Head of caudate nucleus (tissue), 42 donors: ENCODE measurements at regions of chr5 and their contacts with region 1.

Region 1: GRCh38 chr5:146880966-146881365 is 2.4 kb upstream of the PPP2R2B start:
- DNase-seq: no peak

Region 2: GRCh38 chr5:146291421-146292074 is 589.4 kb before region 1 on chr5:
- intact Hi-C with region 1: no loop called
- DNase-seq: peak in 4 of 42 donors; percentile 4 to 31 (median 6)

Region 3: DNA sequence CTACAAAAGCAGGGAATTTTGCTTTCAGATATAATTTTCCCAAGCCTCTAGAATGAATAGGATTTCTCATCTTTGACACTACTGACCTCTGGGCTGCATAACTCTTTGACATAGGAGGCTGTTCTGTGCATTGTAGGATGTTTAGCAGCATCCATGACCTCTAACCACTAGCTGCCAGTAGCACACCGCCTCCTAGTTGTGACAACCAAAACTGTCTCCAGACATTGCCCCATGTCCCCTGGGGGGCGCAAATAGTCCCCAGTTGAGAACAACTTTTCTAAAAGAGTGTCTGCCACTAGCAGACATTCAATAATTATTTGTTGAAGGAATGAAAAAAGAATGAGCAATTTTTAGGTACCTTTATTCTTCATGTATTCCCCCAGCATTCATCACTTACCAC is 490.5 kb before region 1 on chr5:
- intact Hi-C with region 1: no loop called
- DNase-seq: no peak

Region 4: GRCh38 chr5:146751781-146752401 is 129.1 kb before region 1 on chr5:
- intact Hi-C with region 1: no loop called
- DNase-seq: no peak

Region 5: GRCh38 chr5:146959360-146959759 is 78.4 kb after region 1 on chr5:
- intact Hi-C with region 1: loop called (anchors 10 kb)
- DNase-seq: no peak